ENCODE measurements at regions of chr19 and their contacts with region 1.

Region 1: DNA sequence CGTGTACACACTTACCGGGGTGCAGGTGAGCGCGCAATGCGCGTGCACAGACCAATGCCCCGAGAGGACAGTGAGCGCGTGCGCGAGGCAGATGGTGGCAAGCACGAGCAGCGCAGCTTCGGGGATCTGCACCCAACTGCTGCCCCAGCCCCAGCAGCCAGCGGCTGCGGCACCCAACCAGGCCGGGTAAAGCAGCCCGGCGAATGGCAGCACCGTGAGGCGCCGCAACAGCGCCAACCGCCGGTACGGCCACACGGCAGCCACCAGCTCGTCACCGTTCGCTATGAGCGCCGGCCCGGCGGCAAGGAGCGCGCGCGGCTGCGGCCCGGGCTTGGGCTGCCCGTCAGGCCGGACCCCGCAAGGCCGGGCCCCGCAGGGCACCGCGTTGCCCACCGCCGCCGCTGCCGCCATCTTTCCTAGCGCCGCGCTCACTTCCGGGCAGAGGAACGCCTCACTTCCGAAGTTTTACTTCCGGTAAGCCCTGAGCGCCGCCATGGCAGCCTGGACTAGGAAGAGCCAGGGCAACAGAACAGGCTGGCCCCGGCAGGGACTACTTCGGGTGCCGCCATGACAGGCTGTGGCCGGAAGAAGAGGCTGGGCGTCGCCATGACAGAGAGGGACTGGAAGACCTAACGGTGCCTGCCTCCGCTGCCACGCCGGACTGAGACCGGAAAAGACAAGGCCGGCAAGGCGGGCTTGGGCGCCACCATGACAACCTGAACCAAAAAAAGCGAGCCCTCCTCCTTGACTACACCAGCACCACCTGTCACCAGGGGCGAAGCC is at the start of gene ATP13A1:
- DNase-seq: peak; percentile 93
- H3K4me3 Mint-ChIP-seq: peak within 1 kb of the TSS; percentile 95
- H3K27ac Mint-ChIP-seq: peak within 1 kb of the TSS; percentile 97
- H3K4me1 Mint-ChIP-seq: peaks cover 34% of the 10 kb centered on the region
- H3K27me3 Mint-ChIP-seq: no peaks in the 10 kb centered on the region
- total RNA-seq, gene ATP13A1: 48.7 to 55.1 TPM

Region 2: DNA sequence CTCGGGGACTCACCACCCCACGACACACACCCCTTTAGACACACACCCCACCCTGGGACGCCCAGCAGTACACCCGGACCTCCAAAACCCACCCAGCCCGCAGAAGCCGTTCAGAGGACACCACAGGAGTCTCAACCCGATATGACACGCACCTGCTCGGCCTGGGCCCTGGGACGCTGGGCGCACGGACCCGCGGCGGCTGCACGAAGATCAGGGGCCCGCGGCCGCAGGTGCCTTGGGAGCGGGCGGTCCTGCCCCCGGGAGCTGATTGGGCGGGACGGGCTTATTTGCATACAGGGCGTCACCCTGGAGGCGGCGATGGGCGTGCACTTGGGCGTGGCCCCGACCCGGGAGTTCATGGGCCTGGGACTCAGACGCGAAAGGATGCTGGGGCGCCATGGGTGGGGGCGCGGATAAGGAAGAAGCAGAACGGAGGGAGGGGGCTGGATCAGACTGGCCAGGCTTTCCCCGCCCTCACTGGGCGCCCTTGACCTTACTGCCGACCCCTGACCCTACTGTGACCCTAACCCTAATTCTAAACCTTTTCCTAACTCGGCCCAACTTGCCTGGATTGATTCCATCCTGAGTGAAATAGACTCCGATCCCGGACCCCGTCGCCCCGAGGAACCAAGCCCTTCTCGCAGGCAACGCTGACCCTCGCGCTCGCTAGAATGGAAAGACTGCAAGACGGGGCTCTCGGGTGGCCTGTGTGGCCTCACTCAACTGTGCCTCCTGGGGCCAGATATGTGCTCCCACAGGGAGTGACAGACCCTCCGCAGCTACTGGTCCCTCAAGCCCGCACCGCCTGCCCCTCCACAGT is 493.2 kb before region 1 on chr19 and contains the start of gene MEF2B:
- CTCF ChIA-PET with region 1: no interaction called
- intact Hi-C with region 1: no loop called
- DNase-seq: peak; percentile 74
- H3K4me3 Mint-ChIP-seq: peak within 1 kb of the TSS; percentile 28
- H3K27ac Mint-ChIP-seq: no peak within 1 kb of the TSS
- H3K4me1 Mint-ChIP-seq: peaks cover 11% of the 10 kb centered on the region
- H3K27me3 Mint-ChIP-seq: no peaks in the 10 kb centered on the region
- total RNA-seq, gene MEF2B: 3.1 to 4.6 TPM

Region 3: DNA sequence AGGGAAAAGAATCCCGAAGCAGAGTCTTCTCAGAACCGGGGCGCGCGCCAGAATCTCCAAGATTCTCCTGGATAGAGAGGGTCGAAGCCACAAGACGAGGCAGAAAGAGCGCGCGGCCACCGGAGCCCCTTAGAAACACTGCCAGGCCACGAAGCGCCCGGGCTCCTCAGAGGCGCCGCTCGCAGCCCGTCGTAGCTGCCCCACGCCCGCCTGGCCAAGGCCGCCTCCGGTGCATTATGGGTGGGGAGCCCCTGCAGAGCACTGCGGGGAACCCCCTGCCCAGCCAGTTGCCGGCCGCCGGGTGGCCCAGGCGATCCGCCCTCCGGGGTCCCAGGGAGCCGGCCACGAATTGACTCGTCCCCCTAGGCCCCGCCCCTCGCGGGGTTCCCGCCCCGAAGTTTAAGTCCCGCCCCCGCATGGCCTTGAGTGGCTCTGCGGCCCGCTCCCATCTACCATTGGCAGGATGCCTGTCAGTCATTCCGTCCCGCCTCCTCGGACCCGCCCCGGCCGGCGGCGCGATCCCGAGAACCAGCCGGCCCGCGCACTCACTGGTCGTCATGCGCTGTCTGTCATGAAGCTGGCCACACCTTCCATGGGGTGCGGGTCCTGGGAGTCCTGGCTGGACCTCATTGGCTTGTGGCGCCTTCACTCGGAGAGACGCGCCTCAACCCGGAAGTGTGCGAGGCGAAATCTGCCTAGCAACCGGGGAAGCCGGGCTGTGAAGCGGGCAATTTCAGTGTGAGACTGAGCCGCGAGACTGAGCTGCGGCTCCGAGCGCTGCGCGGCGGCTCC is 278.1 kb before region 1 on chr19:
- CTCF ChIA-PET with region 1: no interaction called
- intact Hi-C with region 1: loop called (anchors 5 kb)
- DNase-seq: peak; percentile 100
- H3K4me3 Mint-ChIP-seq: peak overlapping the region; percentile 84
- H3K27ac Mint-ChIP-seq: peak overlapping the region; percentile 72
- H3K4me1 Mint-ChIP-seq: peaks cover 38% of the 10 kb centered on the region
- H3K27me3 Mint-ChIP-seq: no peaks in the 10 kb centered on the region

Region 4: DNA sequence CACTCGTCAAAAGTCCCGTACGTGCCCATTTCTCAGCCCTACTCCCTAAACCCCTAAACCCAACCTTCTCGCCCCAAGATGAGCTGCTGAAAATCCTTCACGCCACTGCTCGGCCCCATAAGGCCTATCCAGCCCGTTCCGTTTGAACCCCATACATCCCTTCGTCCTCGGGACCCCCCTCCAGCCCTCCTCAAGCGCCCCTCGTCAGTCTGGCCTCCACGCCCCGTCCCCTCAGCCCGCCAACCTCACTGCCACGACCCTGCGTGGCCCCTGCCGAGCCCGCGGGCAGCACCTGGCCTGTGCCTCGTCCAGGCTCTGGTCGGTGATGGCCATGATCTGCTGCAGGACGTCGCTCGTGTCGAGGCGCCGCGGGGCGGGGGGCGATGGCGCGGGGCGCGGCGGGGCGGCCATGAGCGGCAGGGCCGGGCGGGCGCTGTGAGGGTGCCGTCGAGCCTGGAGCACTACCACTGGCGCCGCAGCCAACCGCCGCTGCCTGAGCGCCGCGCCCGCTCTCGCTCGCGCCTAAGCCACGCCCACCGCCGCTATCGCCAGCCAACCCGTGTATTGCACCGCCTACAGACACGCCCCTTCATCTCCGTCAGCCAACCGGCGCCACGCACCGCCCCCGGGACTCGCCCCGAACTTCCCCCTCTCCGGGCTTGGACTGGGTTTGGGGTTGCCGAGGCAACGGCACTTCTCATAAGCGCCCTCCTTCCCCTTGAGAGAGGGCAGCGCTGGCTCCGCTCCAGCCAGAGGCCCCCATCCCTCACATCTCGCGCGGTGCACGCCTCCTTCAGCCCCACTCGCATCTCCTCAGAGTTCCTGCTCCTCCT is 45.0 kb before region 1 on chr19 and contains the start of gene PBX4:
- CTCF ChIA-PET with region 1: no interaction called
- intact Hi-C with region 1: loop called (anchors 1 kb)
- DNase-seq: peak; percentile 99
- H3K4me3 Mint-ChIP-seq: peak within 1 kb of the TSS; percentile 81
- H3K27ac Mint-ChIP-seq: peak within 1 kb of the TSS; percentile 46
- H3K4me1 Mint-ChIP-seq: peaks cover 43% of the 10 kb centered on the region
- H3K27me3 Mint-ChIP-seq: no peaks in the 10 kb centered on the region
- total RNA-seq, gene PBX4: 13.5 to 17.5 TPM

Region 5: GRCh38 chr19:19732579-19733501 is 69.4 kb after region 1 on chr19 and contains the start of gene ZNF14:
- CTCF ChIA-PET with region 1: no interaction called
- intact Hi-C with region 1: loop called (anchors 1 kb)
- DNase-seq: peak; percentile 98
- H3K4me3 Mint-ChIP-seq: peak within 1 kb of the TSS; percentile 97
- H3K27ac Mint-ChIP-seq: peak within 1 kb of the TSS; percentile 96
- H3K4me1 Mint-ChIP-seq: peaks cover 20% of the 10 kb centered on the region
- H3K27me3 Mint-ChIP-seq: no peaks in the 10 kb centered on the region
- total RNA-seq, gene ZNF14: 8.4 TPM

Region 6: DNA sequence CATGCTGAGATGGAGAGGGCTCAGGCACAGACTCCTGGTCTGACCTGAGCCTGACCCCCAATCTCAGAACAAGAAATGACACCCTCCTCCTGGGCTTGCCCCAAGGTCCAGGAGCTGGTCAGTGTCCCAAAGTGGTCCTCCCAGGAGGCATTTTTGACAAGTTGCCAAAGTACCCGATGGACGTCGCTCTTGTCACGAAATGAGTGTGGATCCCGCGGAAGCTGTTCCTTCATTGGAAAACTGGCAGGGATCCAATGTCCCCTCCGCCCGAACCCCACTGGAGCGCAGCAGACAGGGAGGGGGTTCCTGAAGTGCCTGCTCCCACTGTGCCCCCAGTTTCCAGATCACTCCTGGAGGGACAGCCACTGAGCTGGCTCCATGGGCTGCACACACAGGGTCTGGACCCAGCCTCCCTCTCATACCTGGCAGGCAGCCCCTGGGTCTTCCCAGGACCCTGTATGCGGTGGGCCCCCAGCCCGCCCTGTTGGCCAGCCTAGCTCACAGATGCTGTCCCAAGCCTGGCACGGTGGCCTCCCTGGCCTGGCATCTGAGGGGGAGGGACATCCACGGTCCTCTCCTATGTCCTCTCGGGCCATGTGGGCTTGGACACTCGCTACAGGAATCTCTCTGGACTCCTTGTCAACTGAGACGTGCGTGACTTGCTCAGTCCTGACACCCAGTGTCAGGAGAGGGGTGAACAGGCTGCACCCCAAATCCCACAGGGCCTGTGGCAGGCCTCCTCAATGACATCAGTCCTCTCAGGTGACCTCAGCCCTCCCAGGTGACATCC is 82.2 kb after region 1 on chr19:
- CTCF ChIA-PET with region 1: no interaction called
- intact Hi-C with region 1: no loop called
- DNase-seq: peak; percentile 21
- H3K4me3 Mint-ChIP-seq: no peak overlapping the region
- H3K27ac Mint-ChIP-seq: no peak overlapping the region
- H3K4me1 Mint-ChIP-seq: no peaks in the 10 kb centered on the region
- H3K27me3 Mint-ChIP-seq: no peaks in the 10 kb centered on the region

Region 7: DNA sequence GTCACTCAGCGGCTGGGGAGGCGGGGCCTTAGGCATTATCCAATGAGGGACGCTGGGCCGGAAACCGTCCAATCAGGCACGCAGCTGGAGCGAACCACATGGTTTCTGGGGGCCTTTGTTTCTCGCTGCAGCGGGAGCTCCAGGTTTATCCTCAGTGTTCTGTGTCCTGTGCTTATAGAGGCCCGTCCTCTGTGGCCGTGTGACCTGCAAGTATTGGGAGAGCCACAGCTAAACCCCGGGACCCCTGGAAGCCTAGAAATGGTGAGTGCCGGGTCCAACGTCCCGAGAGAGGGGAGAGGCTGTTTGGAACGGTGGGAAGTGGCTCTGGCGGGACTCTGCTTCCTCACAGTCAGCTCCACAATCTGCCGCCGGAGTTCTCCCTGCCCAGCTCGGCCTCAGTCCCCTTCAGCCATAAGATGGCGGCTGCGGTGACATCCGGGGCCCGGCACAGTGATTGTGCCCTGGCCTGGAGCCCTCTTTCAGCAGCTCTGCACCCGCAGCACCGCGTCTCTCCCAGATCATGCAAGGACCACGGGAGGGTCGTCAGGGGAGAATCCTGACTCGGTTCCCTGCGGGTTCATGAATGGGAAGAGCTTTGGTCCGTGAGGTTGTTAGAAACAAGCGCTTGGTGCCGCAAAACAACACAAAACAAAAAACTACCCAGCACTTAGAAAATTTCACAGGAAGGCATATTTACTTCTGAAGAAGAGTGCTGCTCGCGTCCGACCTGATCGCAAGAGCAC is 202.5 kb after region 1 on chr19 and contains the start of gene ZNF253:
- CTCF ChIA-PET with region 1: no interaction called
- intact Hi-C with region 1: loop called (anchors 1 kb)
- DNase-seq: peak; percentile 99
- H3K4me3 Mint-ChIP-seq: peak within 1 kb of the TSS; percentile 100
- H3K27ac Mint-ChIP-seq: peak within 1 kb of the TSS; percentile 99
- H3K4me1 Mint-ChIP-seq: peaks cover 26% of the 10 kb centered on the region
- H3K27me3 Mint-ChIP-seq: no peaks in the 10 kb centered on the region
- total RNA-seq, gene ZNF253: 6.1 to 9.6 TPM

Region 8: DNA sequence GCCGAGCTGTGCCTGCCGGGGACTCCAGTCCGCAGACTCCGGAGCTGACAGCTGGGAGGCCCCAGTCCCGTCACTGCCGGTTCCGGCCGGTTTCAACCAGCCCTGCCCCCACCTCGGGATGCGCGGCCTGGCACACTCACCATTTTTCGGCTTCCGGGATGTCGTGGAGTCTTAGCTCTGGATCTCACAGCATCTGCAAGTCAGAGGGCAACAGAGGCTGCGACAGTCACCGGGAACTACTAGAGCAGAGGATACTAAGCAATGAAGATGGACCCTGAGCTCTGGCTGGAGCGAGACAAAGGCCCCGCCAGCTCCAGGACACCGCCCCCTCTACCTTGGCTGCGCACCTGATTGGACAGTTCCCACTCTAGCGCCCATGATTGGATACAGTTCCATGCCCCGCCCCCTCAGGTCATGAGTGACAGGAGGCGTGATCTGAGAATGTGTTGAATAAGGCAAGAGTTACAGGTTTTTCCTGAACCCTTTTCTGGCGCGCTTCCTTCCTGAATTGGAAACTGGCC is 375.8 kb after region 1 on chr19 and contains the start of gene ZNF682:
- CTCF ChIA-PET with region 1: no interaction called
- intact Hi-C with region 1: loop called (anchors 10 kb)
- DNase-seq: peak; percentile 98
- H3K4me3 Mint-ChIP-seq: peak within 1 kb of the TSS; percentile 94
- H3K27ac Mint-ChIP-seq: peak within 1 kb of the TSS; percentile 90
- H3K4me1 Mint-ChIP-seq: peaks cover 15% of the 10 kb centered on the region
- H3K27me3 Mint-ChIP-seq: no peaks in the 10 kb centered on the region
- total RNA-seq, gene ZNF682: 8.1 to 8.9 TPM

Measured in activated naive CD4-positive, alpha-beta T cell treated with anti-CD3 and anti-CD28 coated beads for 36 hours (primary cell).